ENCODE measurements at regions of chr20 and their contacts with region 1.

Region 1: DNA sequence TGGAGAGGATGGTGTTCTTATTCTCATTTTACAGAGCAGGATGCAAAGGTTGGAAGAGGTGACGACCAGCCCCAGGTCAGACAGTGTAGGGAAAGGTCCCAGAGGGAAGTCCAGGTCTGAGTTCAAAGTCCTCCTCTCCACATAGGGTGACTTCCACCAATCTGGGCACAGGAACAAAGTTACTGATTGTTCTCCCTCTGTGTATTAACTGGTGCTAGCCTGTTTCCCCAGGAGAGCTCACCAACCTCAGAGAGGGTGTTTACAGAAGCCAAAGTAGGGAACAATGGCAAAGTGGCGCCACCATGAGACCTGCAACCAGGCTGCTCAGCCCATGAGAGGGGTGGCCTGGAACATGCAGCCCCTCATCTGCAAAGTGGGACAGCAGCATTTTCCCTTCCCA is 16.8 kb upstream of the SIRPB1 start:
- DNase-seq: no peak
- ATAC-seq: no peak
- H3K4me3 ChIP-seq: no peak overlapping the region
- H3K4me3 Mint-ChIP-seq: no peak overlapping the region
- H3K27ac ChIP-seq: no peak overlapping the region
- H3K27ac Mint-ChIP-seq: no peak overlapping the region
- H3K4me1 ChIP-seq: peaks cover 24% of the 10 kb centered on the region
- H3K4me1 Mint-ChIP-seq: peaks cover 24% of the 10 kb centered on the region
- H3K27me3 ChIP-seq: no peaks in the 10 kb centered on the region
- H3K27me3 Mint-ChIP-seq: no peaks in the 10 kb centered on the region
- CTCF ChIP-seq: no peak

Region 2: DNA sequence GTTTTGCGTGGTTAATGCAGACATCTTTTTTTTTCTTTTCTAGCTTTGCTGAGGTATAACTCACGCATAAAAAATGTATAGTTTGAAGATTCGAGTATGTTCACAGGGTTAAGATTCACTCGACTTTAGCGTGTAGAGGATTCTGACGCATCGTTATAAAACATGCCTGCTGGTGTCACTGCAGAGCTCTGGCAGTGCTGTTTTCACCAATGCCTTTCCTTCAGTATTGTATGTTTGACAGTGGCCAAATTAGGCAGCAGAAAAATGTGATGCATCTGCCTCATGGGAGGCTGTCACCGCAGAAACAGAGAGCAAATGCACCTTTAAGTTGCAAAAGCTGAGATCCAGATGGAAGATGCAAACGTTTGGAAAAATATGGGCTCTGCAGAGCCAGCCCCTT is 127.4 kb before region 1 on chr20:
- CTCF ChIA-PET with region 1: no interaction called
- POLR2A ChIA-PET with region 1: no interaction called
- intact Hi-C with region 1: loop called in 1 of 2 experiments (anchors 5 kb)
- DNase-seq: peak in 10 of 14 experiments; percentile 3 to 58 (median 23)
- ATAC-seq: peak; percentile 84
- H3K4me3 ChIP-seq: no peak overlapping the region
- H3K4me3 Mint-ChIP-seq: no peak overlapping the region
- H3K27ac ChIP-seq: no peak overlapping the region
- H3K27ac Mint-ChIP-seq: no peak overlapping the region
- H3K4me1 ChIP-seq: no peaks in the 10 kb centered on the region
- H3K4me1 Mint-ChIP-seq: no peaks in the 10 kb centered on the region
- H3K27me3 ChIP-seq: peaks cover 0 to 3% of the 10 kb centered on the region in 2 experiments
- H3K27me3 Mint-ChIP-seq: no peaks in the 10 kb centered on the region
- CTCF ChIP-seq: peak; percentile 57

Region 3: GRCh38 chr20:1616858-1617434 is 19.7 kb before region 1 on chr20:
- CTCF ChIA-PET with region 1: no interaction called
- POLR2A ChIA-PET with region 1: no interaction called
- intact Hi-C with region 1: no loop called
- DNase-seq: no peak
- ATAC-seq: no peak
- H3K4me3 ChIP-seq: no peak overlapping the region
- H3K4me3 Mint-ChIP-seq: no peak overlapping the region
- H3K27ac ChIP-seq: no peak overlapping the region
- H3K27ac Mint-ChIP-seq: no peak overlapping the region
- H3K4me1 ChIP-seq: peaks cover 24% of the 10 kb centered on the region
- H3K4me1 Mint-ChIP-seq: peaks cover 50% of the 10 kb centered on the region
- H3K27me3 ChIP-seq: no peaks in the 10 kb centered on the region
- H3K27me3 Mint-ChIP-seq: no peaks in the 10 kb centered on the region
- CTCF ChIP-seq: no peak

Region 4: GRCh38 chr20:1651268-1652058 is 14.8 kb after region 1 on chr20:
- CTCF ChIA-PET with region 1: no interaction called
- POLR2A ChIA-PET with region 1: no interaction called
- intact Hi-C with region 1: no loop called
- DNase-seq: peak in 2 of 14 experiments; percentile 35 to 39
- ATAC-seq: peak; percentile 33
- H3K4me3 ChIP-seq: peak overlapping the region; percentile 13
- H3K4me3 Mint-ChIP-seq: peak overlapping the region; percentile 64
- H3K27ac ChIP-seq: peak overlapping the region in 1 of 2 donors; percentile 8
- H3K27ac Mint-ChIP-seq: peak overlapping the region; percentile 53
- H3K4me1 ChIP-seq: peaks cover 55% of the 10 kb centered on the region
- H3K4me1 Mint-ChIP-seq: peaks cover 87% of the 10 kb centered on the region
- H3K27me3 ChIP-seq: no peaks in the 10 kb centered on the region
- H3K27me3 Mint-ChIP-seq: no peaks in the 10 kb centered on the region
- CTCF ChIP-seq: no peak

Measured in CD4-positive, alpha-beta T cell (primary cell).